Left ventricle myocardium superior (tissue), 1 donor: ENCODE measurements at regions of chr1 and their contacts with region 1.

Region 1: DNA sequence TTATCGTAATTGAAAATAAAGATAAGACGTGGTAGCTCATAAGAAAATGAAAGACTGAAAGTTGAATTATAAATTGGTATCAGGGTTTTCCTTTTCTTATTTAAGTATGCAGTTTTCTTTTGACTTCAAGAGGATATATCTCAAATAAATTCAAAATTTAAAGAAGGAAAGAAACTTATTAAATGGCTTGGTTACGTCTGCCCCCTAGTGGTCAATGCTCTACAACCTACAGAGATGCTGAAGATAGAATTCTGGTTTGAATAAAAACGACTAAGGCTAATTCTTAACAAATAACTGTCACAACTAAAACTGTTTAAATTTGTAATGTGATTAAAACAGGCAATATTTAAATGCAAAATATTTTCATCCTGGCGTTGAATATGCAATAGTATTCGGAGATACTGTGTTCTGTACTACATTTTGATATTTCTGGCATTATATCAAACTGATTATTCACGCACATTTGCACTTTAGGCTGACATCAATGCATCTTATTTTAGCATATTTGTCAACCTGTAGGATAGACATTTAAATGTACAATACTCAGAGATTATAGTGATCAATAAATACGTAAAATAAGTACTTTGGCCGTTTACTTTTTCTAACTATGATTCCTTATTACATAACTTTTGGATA is 26.8 kb downstream of the IFI44 start:
- DNase-seq: no peak
- ATAC-seq: peak; percentile 37

Region 2: GRCh38 chr1:78143152-78143551 is 533.3 kb before region 1 on chr1:
- intact Hi-C with region 1: loop called (anchors 5 kb)
- DNase-seq: no peak
- ATAC-seq: no peak

Region 3: GRCh38 chr1:78617615-78618026 is 58.8 kb before region 1 on chr1:
- intact Hi-C with region 1: loop called (anchors 5 kb)
- DNase-seq: peak; percentile 51
- ATAC-seq: peak; percentile 86

Region 4: DNA sequence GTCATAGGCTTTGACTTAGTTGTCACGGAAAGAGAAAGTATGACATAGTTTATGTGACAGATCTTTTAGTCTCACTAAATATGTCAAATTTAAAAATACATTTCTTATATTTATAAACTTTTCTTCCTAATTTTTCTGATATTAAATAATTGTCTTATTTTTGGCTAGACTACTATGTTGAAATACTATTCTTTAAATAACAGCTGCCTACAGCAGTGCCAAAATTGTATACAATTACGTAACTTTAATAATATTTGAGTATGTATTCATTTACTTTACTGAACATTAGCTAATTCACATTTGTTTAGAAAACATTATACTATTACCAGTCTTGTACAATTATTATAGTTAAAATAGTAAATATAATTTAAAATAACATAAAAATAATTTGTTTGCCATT is 192.7 kb after region 1 on chr1:
- intact Hi-C with region 1: no loop called
- DNase-seq: no peak
- ATAC-seq: no peak

Region 5: DNA sequence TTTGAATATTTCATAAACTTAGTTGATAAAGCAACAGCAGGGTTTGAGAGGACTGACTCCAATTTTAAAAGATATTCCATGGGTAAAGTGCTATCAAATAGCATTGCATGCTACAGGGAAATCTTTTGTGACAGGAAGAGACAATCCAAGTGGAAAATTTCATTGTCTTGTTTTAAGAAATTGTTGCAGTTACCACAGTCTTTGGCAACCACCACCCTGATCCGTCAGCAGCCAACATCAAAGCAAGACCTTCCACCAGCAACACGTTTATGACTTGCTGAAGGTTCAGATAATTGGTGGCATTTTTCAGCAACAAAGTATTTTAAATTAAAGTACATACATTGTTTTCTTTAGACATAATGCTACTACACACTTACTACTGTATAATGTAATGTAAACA is 282.2 kb after region 1 on chr1:
- intact Hi-C with region 1: no loop called
- DNase-seq: no peak
- ATAC-seq: no peak